Caco-2 (cell line): ENCODE measurements at regions of chr12 and their contacts with region 1.

Region 1: DNA sequence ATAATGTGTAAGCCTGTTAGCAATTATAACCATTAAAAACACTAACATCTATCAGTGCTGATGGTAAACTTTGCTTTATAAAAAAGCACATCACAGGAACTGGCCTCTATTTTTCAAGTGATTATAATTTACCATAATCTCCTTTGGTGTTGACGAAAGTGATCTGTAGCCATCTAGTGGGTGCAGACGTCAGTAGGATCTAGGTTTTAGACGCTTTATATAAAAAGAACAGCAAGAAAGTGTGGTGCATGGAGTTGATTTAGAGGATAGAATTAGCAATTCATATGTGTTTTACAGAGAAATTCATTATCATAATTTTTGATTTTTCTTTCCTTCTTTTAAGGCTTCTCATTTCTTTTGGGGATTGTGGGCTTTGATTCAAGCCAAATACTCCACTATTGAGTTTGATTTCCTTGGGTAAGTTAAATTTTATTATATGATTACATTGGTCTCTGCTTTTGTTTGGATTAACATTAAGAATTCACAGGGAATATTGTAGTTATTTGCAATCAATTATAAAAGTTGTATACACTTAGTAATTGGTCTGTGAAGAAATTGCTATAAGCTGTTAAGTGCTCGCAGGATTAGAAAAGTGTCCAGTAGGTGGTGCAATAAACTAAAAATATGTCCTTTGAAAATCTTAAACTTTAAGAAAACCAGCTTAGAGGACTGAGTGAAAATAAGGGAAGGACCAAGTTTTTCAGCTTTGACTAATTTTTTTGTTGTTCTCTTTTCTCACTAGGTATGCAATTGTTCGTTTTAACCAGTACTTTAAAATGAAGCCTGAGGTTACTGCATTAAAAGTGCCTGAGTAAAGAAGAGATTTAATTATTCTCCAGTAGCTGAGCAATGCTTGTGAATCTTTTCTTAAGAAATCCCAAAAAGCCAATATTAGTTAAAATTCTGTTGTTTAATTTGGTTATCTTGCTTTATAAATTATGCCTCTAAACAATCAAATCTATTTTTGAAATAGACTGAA is 59.5 kb downstream of the ETNK1 start:
- DNase-seq: peak in 1 of 2 experiments; percentile 53
- H3K4me3 ChIP-seq: no peak overlapping the region
- H3K4me3 Mint-ChIP-seq: no peak overlapping the region
- H3K27ac Mint-ChIP-seq: no peak overlapping the region
- H3K4me1 ChIP-seq: no peaks in the 10 kb centered on the region
- H3K4me1 Mint-ChIP-seq: no peaks in the 10 kb centered on the region
- H3K27me3 ChIP-seq: no peaks in the 10 kb centered on the region
- H3K27me3 Mint-ChIP-seq: no peaks in the 10 kb centered on the region
- CTCF ChIP-seq: peak; percentile 70 to 77

Region 2: DNA sequence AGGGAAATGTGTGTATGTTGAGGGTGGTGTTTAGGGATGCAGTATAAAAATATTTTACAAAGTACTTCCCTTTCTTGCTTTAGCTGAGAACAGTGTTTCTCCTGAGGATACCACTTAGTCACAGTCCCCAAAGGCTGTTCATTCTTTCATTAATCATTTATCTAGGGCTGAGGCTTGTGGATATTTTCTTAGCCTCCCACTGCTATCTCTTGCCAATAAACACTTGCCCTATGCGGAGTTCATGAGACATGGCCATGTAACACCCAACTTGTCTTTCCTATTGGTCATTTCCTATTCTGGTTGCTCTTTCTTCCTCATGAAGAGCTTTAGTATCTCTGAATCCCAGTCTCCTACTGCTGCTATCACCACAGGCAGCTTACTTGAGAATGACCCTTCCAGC is 15.7 kb after region 1 on chr12:
- CTCF ChIA-PET with region 1: interaction called, 6 read pairs
- POLR2A ChIA-PET with region 1: no interaction called
- intact Hi-C with region 1: loop called (anchors 2 kb)
- DNase-seq: no peak
- H3K4me3 ChIP-seq: no peak overlapping the region
- H3K4me3 Mint-ChIP-seq: peak overlapping the region; percentile 60
- H3K27ac Mint-ChIP-seq: peak overlapping the region; percentile 26
- H3K4me1 ChIP-seq: peaks cover 29% of the 10 kb centered on the region
- H3K4me1 Mint-ChIP-seq: peaks cover 33% of the 10 kb centered on the region
- H3K27me3 ChIP-seq: no peaks in the 10 kb centered on the region
- H3K27me3 Mint-ChIP-seq: no peaks in the 10 kb centered on the region
- CTCF ChIP-seq: no peak

Region 3: GRCh38 chr12:22981711-22982110 is 297.3 kb after region 1 on chr12:
- CTCF ChIA-PET with region 1: no interaction called
- POLR2A ChIA-PET with region 1: no interaction called
- intact Hi-C with region 1: loop called (anchors 1 kb)
- DNase-seq: peak in 1 of 2 experiments; percentile 25
- H3K4me3 ChIP-seq: no peak overlapping the region
- H3K4me3 Mint-ChIP-seq: no peak overlapping the region
- H3K27ac Mint-ChIP-seq: no peak overlapping the region
- H3K4me1 ChIP-seq: no peaks in the 10 kb centered on the region
- H3K4me1 Mint-ChIP-seq: no peaks in the 10 kb centered on the region
- H3K27me3 ChIP-seq: no peaks in the 10 kb centered on the region
- H3K27me3 Mint-ChIP-seq: peaks cover 14% of the 10 kb centered on the region
- CTCF ChIP-seq: peak in 1 of 2 experiments; percentile 40

Region 4: GRCh38 chr12:23055004-23055403 is 370.6 kb after region 1 on chr12:
- CTCF ChIA-PET with region 1: no interaction called
- POLR2A ChIA-PET with region 1: no interaction called
- intact Hi-C with region 1: loop called (anchors 1 kb)
- DNase-seq: peak; percentile 50 to 69
- H3K4me3 ChIP-seq: no peak overlapping the region
- H3K4me3 Mint-ChIP-seq: no peak overlapping the region
- H3K27ac Mint-ChIP-seq: no peak overlapping the region
- H3K4me1 ChIP-seq: no peaks in the 10 kb centered on the region
- H3K4me1 Mint-ChIP-seq: no peaks in the 10 kb centered on the region
- H3K27me3 ChIP-seq: no peaks in the 10 kb centered on the region
- H3K27me3 Mint-ChIP-seq: peaks cover 2% of the 10 kb centered on the region
- CTCF ChIP-seq: peak; percentile 68 to 77